ENCODE measurements at regions of chr17 and their contacts with region 1.

Region 1: GRCh38 chr17:41801374-41802271 is 10.1 kb downstream of the P3H4 start:
- DNase-seq: peak; percentile 84
- ATAC-seq: peak; percentile 86
- H3K4me3 ChIP-seq: no peak overlapping the region
- H3K4me3 Mint-ChIP-seq: no peak overlapping the region
- H3K27ac ChIP-seq: no peak overlapping the region
- H3K27ac Mint-ChIP-seq: peak overlapping the region; percentile 5
- H3K4me1 ChIP-seq: peaks cover 7 to 22% of the 10 kb centered on the region in 2 donors
- H3K4me1 Mint-ChIP-seq: peaks cover 16% of the 10 kb centered on the region
- H3K27me3 ChIP-seq: no peaks in the 10 kb centered on the region
- H3K27me3 Mint-ChIP-seq: no peaks in the 10 kb centered on the region
- CTCF ChIP-seq: peak; percentile 99

Region 2: DNA sequence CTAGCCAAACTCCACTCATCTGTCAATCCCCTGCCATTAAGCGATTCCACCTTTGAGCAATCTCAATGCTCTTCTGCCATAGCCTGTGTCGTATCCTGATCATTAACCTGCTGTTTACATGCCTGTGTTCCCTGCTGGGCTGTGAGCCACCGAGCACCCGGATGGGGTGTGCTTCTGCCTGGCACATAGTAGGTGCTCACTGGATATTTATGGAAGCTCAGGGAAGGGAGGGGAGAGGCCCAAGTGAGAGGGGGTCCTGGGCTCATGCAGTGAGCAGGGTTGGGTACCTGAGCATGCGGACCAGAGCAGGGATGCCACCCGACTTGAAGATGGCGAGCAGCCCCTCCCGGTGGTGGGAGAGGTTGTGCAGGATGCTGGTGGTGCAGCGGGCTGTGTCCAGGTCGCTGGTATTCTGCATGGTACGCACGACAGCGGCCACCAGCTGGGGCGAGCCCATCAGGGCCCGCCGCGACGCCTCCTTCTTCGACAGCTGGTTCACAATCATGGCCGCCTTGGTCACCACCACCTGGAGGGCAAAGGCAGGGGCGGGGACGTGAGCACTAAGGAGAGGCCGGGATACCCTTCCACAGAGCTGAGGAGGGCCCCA is 32.8 kb before region 1 on chr17:
- CTCF ChIA-PET with region 1: no interaction called
- POLR2A ChIA-PET with region 1: no interaction called
- intact Hi-C with region 1: no loop called
- DNase-seq: no peak
- ATAC-seq: no peak
- H3K4me3 ChIP-seq: no peak overlapping the region
- H3K4me3 Mint-ChIP-seq: no peak overlapping the region
- H3K27ac ChIP-seq: no peak overlapping the region
- H3K27ac Mint-ChIP-seq: no peak overlapping the region
- H3K4me1 ChIP-seq: peaks cover 7 to 21% of the 10 kb centered on the region in 2 donors
- H3K4me1 Mint-ChIP-seq: peaks cover 15% of the 10 kb centered on the region
- H3K27me3 ChIP-seq: no peaks in the 10 kb centered on the region
- H3K27me3 Mint-ChIP-seq: no peaks in the 10 kb centered on the region
- CTCF ChIP-seq: no peak

Region 3: DNA sequence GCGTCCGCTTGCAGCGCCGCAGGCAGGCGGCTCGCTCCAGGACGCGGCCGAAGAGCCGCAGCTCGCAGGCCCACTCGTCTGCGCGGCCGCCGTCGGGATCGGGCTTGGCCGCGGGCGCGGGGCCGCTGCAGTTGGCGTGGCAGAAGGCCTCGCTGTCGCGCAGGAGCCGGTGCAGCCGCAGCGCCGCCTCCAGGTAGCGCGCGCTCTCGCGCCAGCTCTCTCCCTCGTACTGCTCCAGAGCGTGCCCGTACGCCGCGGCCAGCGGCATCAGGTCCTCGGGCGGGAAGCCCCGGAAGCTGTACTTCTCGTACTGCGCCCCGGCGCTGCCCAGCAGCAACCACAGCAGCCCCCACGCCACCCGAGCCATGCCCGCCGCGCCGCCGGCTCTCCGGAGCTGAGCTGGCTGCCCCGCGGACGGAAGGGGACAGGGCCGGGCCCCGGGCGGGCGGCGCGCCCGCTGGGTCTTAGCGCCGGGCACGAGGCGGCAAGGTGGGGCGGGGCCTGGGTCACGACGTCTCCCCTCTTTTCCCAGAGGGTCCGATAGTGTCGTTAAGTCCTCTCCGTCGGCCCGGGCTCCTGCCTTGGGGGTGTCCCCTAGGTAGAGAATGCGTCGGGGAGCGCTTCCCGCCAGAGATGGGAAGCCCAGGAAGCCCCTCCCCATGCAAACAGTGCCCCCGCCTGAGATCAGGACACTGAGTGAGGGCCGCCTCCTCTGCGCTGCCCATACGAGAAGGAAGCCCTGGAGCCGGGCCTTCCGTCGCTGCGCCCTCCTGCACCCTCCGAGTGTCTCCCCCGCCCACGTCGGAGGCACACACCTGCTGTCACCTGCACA is 10.1 kb after region 1 on chr17 and contains the start of gene P3H4:
- CTCF ChIA-PET with region 1: interaction called, 27 read pairs
- POLR2A ChIA-PET with region 1: interaction called, 3 read pairs
- intact Hi-C with region 1: loop called (anchors 1 kb)
- DNase-seq: peak; percentile 88
- ATAC-seq: peak; percentile 91
- H3K4me3 ChIP-seq: peak within 1 kb of the TSS; percentile 23 to 85 (median 60)
- H3K4me3 Mint-ChIP-seq: peak within 1 kb of the TSS; percentile 96
- H3K27ac ChIP-seq: no peak within 1 kb of the TSS
- H3K27ac Mint-ChIP-seq: peak within 1 kb of the TSS; percentile 83
- H3K4me1 ChIP-seq: peaks cover 20% of the 10 kb centered on the region in 2 donors
- H3K4me1 Mint-ChIP-seq: peaks cover 19% of the 10 kb centered on the region
- H3K27me3 ChIP-seq: peaks cover 0 to 25% (median 5%) of the 10 kb centered on the region in 4 experiments
- H3K27me3 Mint-ChIP-seq: peaks cover 6% of the 10 kb centered on the region
- CTCF ChIP-seq: peak; percentile 82
- total RNA-seq, gene P3H4: 2.5 and 2.8 TPM in 2 replicates

Region 4: GRCh38 chr17:41885733-41886132 is 84.1 kb after region 1 on chr17:
- CTCF ChIA-PET with region 1: no interaction called
- POLR2A ChIA-PET with region 1: interaction called, 4 read pairs
- intact Hi-C with region 1: loop called (anchors 1 kb)
- DNase-seq: no peak
- ATAC-seq: no peak
- H3K4me3 ChIP-seq: no peak overlapping the region
- H3K4me3 Mint-ChIP-seq: no peak overlapping the region
- H3K27ac ChIP-seq: no peak overlapping the region
- H3K27ac Mint-ChIP-seq: no peak overlapping the region
- H3K4me1 ChIP-seq: no peaks in the 10 kb centered on the region
- H3K4me1 Mint-ChIP-seq: peaks cover 3% of the 10 kb centered on the region
- H3K27me3 ChIP-seq: no peaks in the 10 kb centered on the region
- H3K27me3 Mint-ChIP-seq: no peaks in the 10 kb centered on the region
- CTCF ChIP-seq: no peak

Region 5: GRCh38 chr17:42101513-42102319 is 300.1 kb after region 1 on chr17:
- CTCF ChIA-PET with region 1: no interaction called
- POLR2A ChIA-PET with region 1: no interaction called
- intact Hi-C with region 1: no loop called
- DNase-seq: peak; percentile 59
- ATAC-seq: peak; percentile 59
- H3K4me3 ChIP-seq: no peak overlapping the region
- H3K4me3 Mint-ChIP-seq: no peak overlapping the region
- H3K27ac ChIP-seq: no peak overlapping the region
- H3K27ac Mint-ChIP-seq: no peak overlapping the region
- H3K4me1 ChIP-seq: peaks cover 11 to 17% of the 10 kb centered on the region in 2 donors
- H3K4me1 Mint-ChIP-seq: peaks cover 9% of the 10 kb centered on the region
- H3K27me3 ChIP-seq: peaks cover 0 to 15% (median 9%) of the 10 kb centered on the region in 4 experiments
- H3K27me3 Mint-ChIP-seq: peaks cover 3% of the 10 kb centered on the region
- CTCF ChIP-seq: peak; percentile 78

Measured in B cell (primary cell).